ENCODE measurements at regions of chr22 and their contacts with region 1.

Region 1: GRCh38 chr22:42994881-42995562 is 19.9 kb downstream of the PACSIN2 start:
- H3K4me3 Mint-ChIP-seq: peak overlapping the region; percentile 85
- H3K27ac Mint-ChIP-seq: peak overlapping the region; percentile 97
- H3K4me1 Mint-ChIP-seq: peaks cover 85% of the 10 kb centered on the region
- H3K27me3 Mint-ChIP-seq: no peaks in the 10 kb centered on the region

Region 2: GRCh38 chr22:43014869-43015676 is 20.1 kb after region 1 on chr22 and contains the start of gene PACSIN2:
- intact Hi-C with region 1: loop called (anchors 1 kb)
- H3K4me3 Mint-ChIP-seq: peak within 1 kb of the TSS; percentile 93
- H3K27ac Mint-ChIP-seq: peak within 1 kb of the TSS; percentile 93
- H3K4me1 Mint-ChIP-seq: peaks cover 41% of the 10 kb centered on the region
- H3K27me3 Mint-ChIP-seq: peaks cover 3% of the 10 kb centered on the region

Region 3: GRCh38 chr22:43031617-43032016 is 36.6 kb after region 1 on chr22:
- intact Hi-C with region 1: loop called (anchors 5 kb)
- H3K4me3 Mint-ChIP-seq: no peak overlapping the region
- H3K27ac Mint-ChIP-seq: no peak overlapping the region
- H3K4me1 Mint-ChIP-seq: peaks cover 15% of the 10 kb centered on the region
- H3K27me3 Mint-ChIP-seq: no peaks in the 10 kb centered on the region

Region 4: DNA sequence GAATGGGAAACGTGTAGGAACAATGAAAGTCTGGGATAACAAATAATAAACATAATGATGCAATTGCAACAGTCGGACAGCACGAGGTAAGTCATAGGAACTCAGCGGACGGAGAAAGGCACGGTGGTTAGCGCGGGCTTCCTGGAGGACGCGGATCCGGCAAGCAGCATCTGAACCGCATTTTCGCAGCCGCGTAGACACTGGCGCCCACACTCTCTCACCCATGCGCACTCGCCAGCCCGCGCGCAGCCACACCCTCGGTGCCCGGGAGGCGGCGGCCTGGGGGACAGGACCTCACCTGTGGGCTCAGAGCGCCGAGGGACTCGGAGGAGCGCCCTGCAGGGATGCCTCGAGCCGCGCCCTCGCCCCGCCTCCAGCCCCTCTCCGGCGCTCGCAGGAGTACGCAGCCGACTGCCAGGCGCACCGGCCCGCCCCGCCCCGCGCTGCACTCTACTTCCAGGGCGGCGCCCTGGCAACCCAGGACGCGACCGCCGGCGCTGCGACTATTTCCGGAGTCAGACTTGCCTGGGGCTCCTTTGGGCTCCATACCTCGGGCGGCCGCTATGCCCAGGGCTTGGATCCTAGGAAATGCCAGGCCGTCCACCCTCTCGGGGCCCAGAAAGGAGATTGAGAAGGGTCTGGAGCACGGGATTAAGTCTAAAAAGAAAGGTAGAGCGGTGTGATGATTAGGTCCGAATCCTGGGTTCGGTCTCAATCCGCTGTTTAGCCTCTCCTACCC is 94.1 kb after region 1 on chr22 and contains the start of gene TTLL1:
- intact Hi-C with region 1: loop called (anchors 10 kb)
- H3K4me3 Mint-ChIP-seq: peak within 1 kb of the TSS; percentile 80
- H3K27ac Mint-ChIP-seq: peak within 1 kb of the TSS; percentile 89
- H3K4me1 Mint-ChIP-seq: peaks cover 34% of the 10 kb centered on the region
- H3K27me3 Mint-ChIP-seq: no peaks in the 10 kb centered on the region

Measured in dendritic cell treated with granulocyte-macrophage colony-stimulating factor and Interleukin-4, amounts not matched to agents 40 ng/mL and 50 ng/mL, for 4 days (primary cell).